Activated CD4-positive, alpha-beta memory T cell treated with anti-CD3 and anti-CD28 coated beads for 36 hours (primary cell): ENCODE measurements at regions of chr4 and their contacts with region 1.

Region 1: GRCh38 chr4:37891260-37892159 is 626 bp downstream of the TBC1D1 start:
- DNase-seq: peak; percentile 71
- H3K4me3 Mint-ChIP-seq: peak overlapping the region; percentile 87
- H3K27ac Mint-ChIP-seq: peak overlapping the region; percentile 90
- H3K4me1 Mint-ChIP-seq: peaks cover 32% of the 10 kb centered on the region
- H3K27me3 Mint-ChIP-seq: peaks cover 4% of the 10 kb centered on the region

Region 2: GRCh38 chr4:37603070-37603468 is 288.4 kb before region 1 on chr4:
- CTCF ChIA-PET with region 1: interaction called, 3 read pairs
- POLR2A ChIA-PET with region 1: interaction called, 3 read pairs
- intact Hi-C with region 1: loop called (anchors 5 kb)
- DNase-seq: peak; percentile 83
- H3K4me3 Mint-ChIP-seq: no peak overlapping the region
- H3K27ac Mint-ChIP-seq: no peak overlapping the region
- H3K4me1 Mint-ChIP-seq: peaks cover 8% of the 10 kb centered on the region
- H3K27me3 Mint-ChIP-seq: no peaks in the 10 kb centered on the region

Region 3: GRCh38 chr4:37715889-37716402 is 175.6 kb before region 1 on chr4:
- CTCF ChIA-PET with region 1: no interaction called
- POLR2A ChIA-PET with region 1: no interaction called
- intact Hi-C with region 1: loop called (anchors 2 kb)
- DNase-seq: peak; percentile 57
- H3K4me3 Mint-ChIP-seq: no peak overlapping the region
- H3K27ac Mint-ChIP-seq: peak overlapping the region; percentile 81
- H3K4me1 Mint-ChIP-seq: peaks cover 20% of the 10 kb centered on the region
- H3K27me3 Mint-ChIP-seq: peaks cover 10% of the 10 kb centered on the region

Region 4: DNA sequence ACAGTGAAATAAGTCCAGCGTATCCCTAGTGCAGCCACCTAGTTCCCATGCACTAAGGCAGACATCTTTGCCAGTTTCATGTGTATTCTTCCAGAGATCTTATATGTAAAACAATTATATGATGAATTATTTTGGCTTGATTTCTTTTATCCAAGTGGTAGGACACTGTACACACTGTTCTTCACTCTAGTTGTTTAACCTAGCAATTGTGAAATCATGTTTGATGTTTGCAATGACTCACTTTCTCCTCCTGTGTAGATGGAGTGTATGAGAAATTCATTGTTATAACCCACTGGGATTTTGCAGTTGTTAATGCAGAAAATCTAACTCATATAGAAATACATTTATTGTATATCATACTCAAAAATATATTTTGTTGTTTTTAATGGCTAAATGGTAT is 18.1 kb before region 1 on chr4:
- CTCF ChIA-PET with region 1: no interaction called
- POLR2A ChIA-PET with region 1: no interaction called
- intact Hi-C with region 1: loop called (anchors 2 kb)
- DNase-seq: no peak
- H3K4me3 Mint-ChIP-seq: no peak overlapping the region
- H3K27ac Mint-ChIP-seq: no peak overlapping the region
- H3K4me1 Mint-ChIP-seq: peaks cover 15% of the 10 kb centered on the region
- H3K27me3 Mint-ChIP-seq: no peaks in the 10 kb centered on the region

Region 5: DNA sequence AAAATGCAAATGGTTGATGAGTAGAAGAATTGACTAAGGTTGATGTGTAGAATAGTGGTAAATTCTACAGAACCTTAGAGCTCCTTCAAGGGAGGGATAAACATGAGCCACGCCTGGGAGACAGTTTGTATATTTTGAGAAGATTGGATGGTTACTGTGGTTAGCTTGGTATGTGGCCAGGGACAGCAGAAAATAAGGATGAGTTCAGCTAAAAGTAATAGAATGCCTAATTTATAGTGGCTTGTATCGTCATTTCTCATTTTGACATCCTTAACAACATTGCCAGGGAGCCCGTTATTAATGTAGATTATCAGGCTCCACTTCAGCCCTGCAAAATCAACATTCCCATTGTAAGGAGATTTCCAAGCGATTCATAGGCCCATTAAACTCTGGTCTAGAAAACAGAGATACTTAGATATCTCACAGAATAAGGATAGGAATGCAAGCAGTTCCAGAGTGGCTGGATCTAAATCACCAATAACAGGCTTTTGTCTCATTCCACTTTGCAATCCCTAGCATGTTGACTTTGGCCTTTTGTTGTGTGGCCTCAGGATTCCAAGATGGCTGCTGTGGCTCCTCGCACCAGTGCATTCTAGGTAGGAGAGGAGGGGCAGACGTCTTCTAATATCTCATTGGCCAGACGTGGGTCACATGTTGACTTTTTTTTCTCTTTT is 62.2 kb after region 1 on chr4:
- CTCF ChIA-PET with region 1: no interaction called
- POLR2A ChIA-PET with region 1: interaction called, 3 read pairs
- intact Hi-C with region 1: loop called (anchors 1 kb)
- DNase-seq: no peak
- H3K4me3 Mint-ChIP-seq: no peak overlapping the region
- H3K27ac Mint-ChIP-seq: no peak overlapping the region
- H3K4me1 Mint-ChIP-seq: peaks cover 13% of the 10 kb centered on the region
- H3K27me3 Mint-ChIP-seq: no peaks in the 10 kb centered on the region

Region 6: GRCh38 chr4:38160487-38161207 is 269.1 kb after region 1 on chr4:
- CTCF ChIA-PET with region 1: no interaction called
- POLR2A ChIA-PET with region 1: no interaction called
- intact Hi-C with region 1: loop called (anchors 5 kb)
- DNase-seq: peak; percentile 75
- H3K4me3 Mint-ChIP-seq: peak overlapping the region; percentile 10
- H3K27ac Mint-ChIP-seq: peak overlapping the region; percentile 68
- H3K4me1 Mint-ChIP-seq: peaks cover 74% of the 10 kb centered on the region
- H3K27me3 Mint-ChIP-seq: no peaks in the 10 kb centered on the region

Region 7: DNA sequence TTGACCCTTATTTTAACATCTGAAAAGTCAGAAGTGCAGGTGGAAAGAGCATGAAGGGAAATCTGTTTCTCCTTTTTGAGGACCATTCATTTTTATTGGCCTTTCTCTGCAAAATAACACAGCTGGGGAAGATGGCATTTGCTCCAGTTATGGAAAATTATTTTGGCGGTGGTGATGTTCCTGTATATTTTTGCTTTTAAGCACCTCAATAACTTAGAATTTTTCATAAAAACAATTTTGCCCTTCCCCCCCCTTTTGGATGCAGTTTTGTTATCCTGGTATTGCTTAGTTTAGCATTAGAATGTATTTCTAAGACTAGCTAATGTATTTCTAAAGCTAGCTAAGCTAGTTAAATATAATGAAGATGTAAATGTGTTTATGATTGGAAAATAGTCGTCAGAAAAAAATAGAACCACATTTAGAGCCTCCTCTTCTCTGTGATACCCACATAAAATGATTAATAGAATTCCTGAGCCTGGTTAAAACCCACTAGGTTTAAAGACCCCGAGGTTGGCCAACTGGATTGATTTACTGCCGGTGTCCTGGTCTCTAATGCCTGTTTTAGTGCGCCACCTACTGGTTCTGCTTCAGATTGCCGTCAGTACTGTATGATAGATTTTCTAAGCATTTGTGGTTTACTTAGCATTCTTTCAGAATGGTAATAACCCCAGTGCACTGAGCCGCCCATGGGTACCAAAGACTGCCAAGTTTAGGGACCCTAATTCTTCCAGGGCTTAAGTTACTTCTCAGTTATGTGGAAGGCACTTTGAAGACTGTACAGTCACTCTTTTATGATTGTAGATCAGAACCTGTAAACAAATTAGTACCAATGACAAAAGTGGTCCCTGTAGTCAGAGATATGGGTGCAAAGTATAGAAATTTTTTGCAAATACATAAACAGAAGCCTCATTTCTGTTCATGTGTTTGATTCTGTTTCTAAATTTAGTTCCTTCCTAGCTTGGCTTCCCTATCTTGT is 783.9 kb after region 1 on chr4:
- CTCF ChIA-PET with region 1: no interaction called
- POLR2A ChIA-PET with region 1: no interaction called
- intact Hi-C with region 1: loop called (anchors 5 kb)
- DNase-seq: peak; percentile 89
- H3K4me3 Mint-ChIP-seq: peak overlapping the region; percentile 22
- H3K27ac Mint-ChIP-seq: peak overlapping the region; percentile 19
- H3K4me1 Mint-ChIP-seq: peaks cover 79% of the 10 kb centered on the region
- H3K27me3 Mint-ChIP-seq: no peaks in the 10 kb centered on the region